ENCODE measurements at regions of chr7 and their contacts with region 1.

Region 1: DNA sequence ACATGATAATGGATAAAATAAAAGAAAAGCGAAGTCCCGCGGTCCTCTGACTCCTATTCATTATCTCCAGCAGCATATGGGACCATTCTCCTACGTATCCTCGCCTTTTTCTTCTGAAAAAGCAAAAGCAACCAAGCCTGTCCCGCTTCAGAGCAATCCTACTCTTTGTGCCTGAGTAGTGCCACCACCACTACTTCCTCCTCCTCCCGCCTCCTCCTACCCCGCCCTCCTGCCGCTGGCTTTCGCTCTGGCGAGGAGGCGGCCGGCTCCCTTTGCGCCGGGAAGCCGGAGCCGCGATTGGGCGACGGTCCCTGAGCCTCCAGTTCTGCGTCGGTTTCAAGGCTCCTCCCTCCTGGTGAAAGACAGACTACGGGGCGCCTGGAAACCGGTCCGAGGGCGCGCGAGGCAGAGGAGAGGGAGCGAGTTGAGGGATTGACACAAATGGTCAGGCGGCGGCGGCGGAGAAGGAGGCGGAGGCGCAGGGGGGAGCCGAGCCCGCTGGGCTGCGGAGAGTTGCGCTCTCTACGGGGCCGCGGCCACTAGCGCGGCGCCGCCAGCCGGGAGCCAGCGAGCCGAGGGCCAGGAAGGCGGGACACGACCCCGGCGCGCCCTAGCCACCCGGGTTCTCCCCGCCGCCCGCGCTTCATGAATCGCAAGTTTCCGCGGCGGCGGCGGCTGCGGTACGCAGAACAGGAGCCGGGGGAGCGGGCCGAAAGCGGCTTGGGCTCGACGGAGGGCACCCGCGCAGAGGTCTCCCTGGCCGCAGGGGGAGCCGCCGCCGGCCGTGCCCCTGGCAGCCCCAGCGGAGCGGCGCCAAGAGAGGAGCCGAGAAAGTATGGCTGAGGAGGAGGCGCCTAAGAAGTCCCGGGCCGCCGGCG is at the start of gene FZD1:
- DNase-seq: peak; percentile 98
- H3K4me3 Mint-ChIP-seq: peak within 1 kb of the TSS; percentile 83
- H3K27ac Mint-ChIP-seq: peak within 1 kb of the TSS; percentile 61
- H3K4me1 Mint-ChIP-seq: peaks cover 20% of the 10 kb centered on the region
- H3K27me3 Mint-ChIP-seq: no peaks in the 10 kb centered on the region
- CTCF ChIP-seq: peak; percentile 10
- total RNA-seq, gene FZD1: 3.3 and 4.4 TPM in 2 replicates

Region 2: GRCh38 chr7:91107460-91107859 is 156.8 kb before region 1 on chr7:
- CTCF ChIA-PET with region 1: no interaction called
- POLR2A ChIA-PET with region 1: no interaction called
- intact Hi-C with region 1: loop called (anchors 5 kb)
- DNase-seq: no peak
- H3K4me3 Mint-ChIP-seq: no peak overlapping the region
- H3K27ac Mint-ChIP-seq: no peak overlapping the region
- H3K4me1 Mint-ChIP-seq: no peaks in the 10 kb centered on the region
- H3K27me3 Mint-ChIP-seq: no peaks in the 10 kb centered on the region
- CTCF ChIP-seq: no peak

Region 3: DNA sequence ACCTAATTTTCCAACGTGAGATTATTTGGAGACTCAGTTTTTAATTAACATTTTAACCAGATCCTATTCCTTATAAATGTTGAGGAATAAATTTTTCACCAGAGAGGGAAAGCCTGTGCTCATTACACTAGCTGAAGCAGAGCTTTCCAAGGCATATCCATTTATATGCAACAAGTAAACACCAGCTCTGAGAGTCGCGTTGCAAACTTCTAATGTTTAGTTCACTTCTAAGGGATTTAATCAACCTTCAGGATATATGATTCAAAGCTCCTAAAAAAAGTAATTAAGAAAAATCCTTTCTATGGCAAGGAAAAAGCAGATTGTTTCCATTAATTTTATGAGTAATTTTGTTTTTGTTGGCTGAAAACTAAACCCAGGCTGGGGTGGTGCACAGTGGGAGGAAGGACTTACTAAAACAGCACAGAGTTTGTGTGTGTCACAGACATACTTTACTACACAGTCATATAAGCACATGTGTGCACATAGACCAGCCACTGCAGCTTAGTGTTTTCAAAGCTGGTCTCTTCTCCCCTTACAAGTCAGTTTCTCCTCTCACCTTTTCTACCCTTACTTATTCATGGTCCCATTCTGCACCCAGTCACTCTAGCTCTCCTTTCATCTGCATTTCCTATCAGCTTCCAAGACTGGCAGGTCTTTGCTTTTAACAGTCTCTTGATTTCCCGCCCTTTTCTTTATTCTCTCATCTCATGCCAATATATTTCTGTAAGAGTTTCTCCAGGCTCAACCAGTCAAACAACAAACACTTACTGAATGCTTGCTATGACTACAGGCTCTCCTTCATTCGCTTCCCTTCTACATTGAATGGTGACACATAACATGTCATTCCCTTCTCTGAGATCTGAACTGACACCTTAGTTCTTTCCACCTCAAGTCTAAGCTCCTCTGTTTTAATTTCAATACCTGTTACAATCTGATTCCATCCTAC is 81.2 kb before region 1 on chr7:
- CTCF ChIA-PET with region 1: interaction called, 3 read pairs
- POLR2A ChIA-PET with region 1: interaction called, 3 read pairs
- intact Hi-C with region 1: loop called (anchors 5 kb)
- DNase-seq: peak; percentile 78
- H3K4me3 Mint-ChIP-seq: no peak overlapping the region
- H3K27ac Mint-ChIP-seq: peak overlapping the region; percentile 54
- H3K4me1 Mint-ChIP-seq: peaks cover 10% of the 10 kb centered on the region
- H3K27me3 Mint-ChIP-seq: no peaks in the 10 kb centered on the region
- CTCF ChIP-seq: no peak

Region 4: GRCh38 chr7:91201442-91202113 is 62.7 kb before region 1 on chr7:
- CTCF ChIA-PET with region 1: no interaction called
- POLR2A ChIA-PET with region 1: no interaction called
- intact Hi-C with region 1: no loop called
- DNase-seq: no peak
- H3K4me3 Mint-ChIP-seq: no peak overlapping the region
- H3K27ac Mint-ChIP-seq: no peak overlapping the region
- H3K4me1 Mint-ChIP-seq: peaks cover 3% of the 10 kb centered on the region
- H3K27me3 Mint-ChIP-seq: no peaks in the 10 kb centered on the region
- CTCF ChIP-seq: no peak

Region 5: GRCh38 chr7:91295576-91295975 is 31.3 kb after region 1 on chr7:
- CTCF ChIA-PET with region 1: no interaction called
- POLR2A ChIA-PET with region 1: no interaction called
- intact Hi-C with region 1: no loop called
- DNase-seq: no peak
- H3K4me3 Mint-ChIP-seq: no peak overlapping the region
- H3K27ac Mint-ChIP-seq: no peak overlapping the region
- H3K4me1 Mint-ChIP-seq: no peaks in the 10 kb centered on the region
- H3K27me3 Mint-ChIP-seq: peaks cover 38% of the 10 kb centered on the region
- CTCF ChIP-seq: no peak

Region 6: DNA sequence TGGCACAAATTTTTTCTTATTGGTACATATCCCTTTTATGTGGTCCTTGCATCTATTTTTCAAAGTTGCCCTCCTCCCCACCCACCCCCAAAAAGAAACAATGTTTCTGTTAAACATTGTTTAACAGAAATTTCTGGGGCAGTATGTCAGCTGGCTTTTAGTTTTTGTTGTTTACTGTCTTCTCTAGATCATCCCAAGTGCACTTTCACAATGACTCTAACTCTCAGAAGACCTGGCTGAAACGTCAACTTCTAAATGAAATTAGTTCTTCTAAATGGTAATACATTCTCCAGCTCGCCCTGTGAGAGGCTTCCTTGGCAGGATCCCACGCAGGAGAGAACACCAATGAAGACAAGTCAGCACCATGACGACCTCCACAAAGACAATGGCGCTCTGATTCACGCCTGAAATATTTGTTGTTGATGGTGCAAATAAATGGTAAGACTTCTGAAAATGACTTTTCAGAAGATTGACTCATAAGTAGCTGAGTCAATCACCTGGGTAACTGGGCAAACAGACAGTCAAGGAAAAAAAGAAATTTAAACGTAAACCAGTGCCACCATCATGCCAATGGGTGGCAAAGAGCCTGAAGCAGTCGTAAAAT is 293.6 kb after region 1 on chr7:
- CTCF ChIA-PET with region 1: no interaction called
- POLR2A ChIA-PET with region 1: no interaction called
- intact Hi-C with region 1: loop called (anchors 2 kb)
- DNase-seq: peak; percentile 97
- H3K4me3 Mint-ChIP-seq: peak overlapping the region; percentile 59
- H3K27ac Mint-ChIP-seq: peak overlapping the region; percentile 98
- H3K4me1 Mint-ChIP-seq: peaks cover 27% of the 10 kb centered on the region
- H3K27me3 Mint-ChIP-seq: no peaks in the 10 kb centered on the region
- CTCF ChIP-seq: no peak

Measured in MCF 10A (cell line).